HepG2 (cell line): ENCODE measurements at regions of chr17 and their contacts with region 1.

Region 1: GRCh38 chr17:59746849-59747445 is 39.5 kb downstream of the VMP1 start:
- DNase-seq: peak; percentile 62
- ATAC-seq: peak; percentile 69
- H3K4me3 ChIP-seq: no peak overlapping the region
- H3K27ac ChIP-seq: no peak overlapping the region
- H3K4me1 ChIP-seq: peaks cover 25% of the 10 kb centered on the region
- H3K27me3 ChIP-seq: no peaks in the 10 kb centered on the region
- CTCF ChIP-seq: peak; percentile 71
- EP300 ChIP-seq: no peak
- POLR2A ChIP-seq: no peak
- RAD21 ChIP-seq: peak; percentile 34; the same call in 1 of the 2 replicates

Region 2: GRCh38 chr17:59714255-59714654 is 32.7 kb before region 1 on chr17:
- CTCF ChIA-PET with region 1: no interaction called
- POLR2A ChIA-PET with region 1: no interaction called
- in situ Hi-C with region 1: no loop called
- intact Hi-C with region 1: no loop called
- DNase-seq: no peak
- ATAC-seq: peak; percentile 44
- H3K4me3 ChIP-seq: 0 out of 6 replicates have a peak overlapping the region, but pooled peaks of 1 of the 3 experiments have one; percentile 13
- H3K27ac ChIP-seq: peak overlapping the region; percentile 39
- H3K4me1 ChIP-seq: peaks cover 68% of the 10 kb centered on the region
- H3K27me3 ChIP-seq: no peaks in the 10 kb centered on the region
- CTCF ChIP-seq: no peak
- EP300 ChIP-seq: no peak
- POLR2A ChIP-seq: no peak
- RAD21 ChIP-seq: no peak

Region 3: GRCh38 chr17:59859444-59860025 is 112.6 kb after region 1 on chr17:
- CTCF ChIA-PET with region 1: interaction called, 39 read pairs
- POLR2A ChIA-PET with region 1: no interaction called
- in situ Hi-C with region 1: no loop called
- intact Hi-C with region 1: no loop called
- DNase-seq: peak; percentile 71
- ATAC-seq: no peak
- H3K4me3 ChIP-seq: no peak overlapping the region
- H3K27ac ChIP-seq: no peak overlapping the region
- H3K4me1 ChIP-seq: peaks cover 54% of the 10 kb centered on the region
- H3K27me3 ChIP-seq: no peaks in the 10 kb centered on the region
- CTCF ChIP-seq: peak; percentile 68
- EP300 ChIP-seq: no peak
- POLR2A ChIP-seq: no peak
- RAD21 ChIP-seq: peak; percentile 87